Calu3 (cell line): ENCODE measurements at regions of chr16 and their contacts with region 1.

Region 1: DNA sequence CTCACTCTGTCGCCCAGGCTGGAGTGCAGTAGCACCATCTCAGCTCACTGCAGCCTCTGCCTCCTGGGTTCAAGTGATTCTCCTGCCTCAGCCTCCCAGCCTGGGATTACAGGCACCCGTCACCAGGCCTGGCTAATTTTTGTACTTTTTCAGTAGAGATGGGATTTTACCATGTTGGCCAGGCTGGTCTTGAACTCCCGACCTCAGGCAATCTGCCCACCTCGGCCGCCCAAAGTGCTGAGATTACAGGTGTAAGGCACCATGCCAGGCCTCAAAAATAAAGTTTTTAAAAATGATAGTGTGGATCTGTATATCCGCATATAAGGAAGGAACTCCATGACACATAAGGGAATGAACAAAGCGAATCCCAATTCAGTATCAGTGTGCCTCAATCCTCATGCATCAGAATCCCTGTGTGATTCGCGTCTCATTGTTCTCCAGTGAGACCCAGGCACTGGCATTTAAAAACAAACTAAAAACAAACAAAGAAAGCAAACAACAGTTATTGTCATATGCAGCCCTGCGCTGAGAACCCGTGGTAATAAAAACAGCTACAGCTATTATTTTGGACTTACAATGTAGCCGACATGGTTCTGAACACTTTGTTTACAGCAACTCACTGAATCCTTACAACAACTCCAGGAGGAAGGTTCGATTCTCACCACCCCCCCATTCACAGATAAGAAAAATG is 54.1 kb upstream of the CREBBP start:
- DNase-seq: no peak
- H3K4me3 Mint-ChIP-seq: no peak overlapping the region
- H3K27ac Mint-ChIP-seq: no peak overlapping the region
- H3K4me1 Mint-ChIP-seq: no peaks in the 10 kb centered on the region
- H3K27me3 Mint-ChIP-seq: peaks cover 30% of the 10 kb centered on the region
- CTCF ChIP-seq: no peak

Region 2: DNA sequence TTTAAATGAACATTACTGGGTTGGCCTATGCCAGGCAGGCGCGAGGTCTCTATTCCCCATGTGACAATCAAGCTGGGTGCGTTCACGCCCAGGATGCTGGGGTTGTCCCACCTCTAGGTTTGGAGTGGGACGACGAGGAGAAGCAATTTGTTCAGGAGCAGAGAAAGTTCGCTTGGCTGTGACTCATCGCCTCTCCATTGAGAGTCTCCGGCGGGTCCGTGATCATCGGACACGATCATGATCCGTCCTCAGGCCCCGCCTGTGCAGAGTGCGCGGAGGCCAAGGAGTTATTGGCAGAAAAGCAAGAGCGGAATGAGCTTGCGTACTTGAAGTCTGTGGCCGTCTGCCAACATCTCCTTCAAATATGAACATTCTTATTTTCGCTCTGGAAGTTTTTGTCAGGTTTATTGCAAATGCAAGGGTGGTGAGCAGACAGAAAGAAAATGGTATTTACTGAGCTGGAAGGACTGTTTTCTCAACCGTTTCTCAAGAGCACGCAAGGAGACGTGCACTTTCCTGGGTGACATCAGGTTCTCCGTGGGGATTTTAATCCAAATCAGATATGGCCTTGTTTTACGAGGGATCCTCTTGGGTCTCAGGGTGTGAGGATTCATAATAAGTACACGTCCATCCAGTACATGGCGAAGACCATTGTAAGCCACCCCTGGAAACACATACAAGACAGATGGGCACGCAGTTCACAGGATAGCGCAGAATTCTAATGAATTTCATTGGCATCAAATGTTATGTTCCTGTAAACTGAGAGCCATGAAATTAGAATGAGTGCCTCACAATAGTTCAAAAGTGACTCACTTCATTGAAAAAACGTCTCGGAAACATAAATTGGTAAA is 15.9 kb after region 1 on chr16:
- CTCF ChIA-PET with region 1: interaction called, 12 read pairs
- intact Hi-C with region 1: no loop called
- DNase-seq: peak; percentile 53
- H3K4me3 Mint-ChIP-seq: peak overlapping the region; percentile 39
- H3K27ac Mint-ChIP-seq: no peak overlapping the region
- H3K4me1 Mint-ChIP-seq: peaks cover 29% of the 10 kb centered on the region
- H3K27me3 Mint-ChIP-seq: peaks cover 70% of the 10 kb centered on the region
- CTCF ChIP-seq: no peak